ENCODE measurements at regions of chr10 and their contacts with region 1.

Region 1: DNA sequence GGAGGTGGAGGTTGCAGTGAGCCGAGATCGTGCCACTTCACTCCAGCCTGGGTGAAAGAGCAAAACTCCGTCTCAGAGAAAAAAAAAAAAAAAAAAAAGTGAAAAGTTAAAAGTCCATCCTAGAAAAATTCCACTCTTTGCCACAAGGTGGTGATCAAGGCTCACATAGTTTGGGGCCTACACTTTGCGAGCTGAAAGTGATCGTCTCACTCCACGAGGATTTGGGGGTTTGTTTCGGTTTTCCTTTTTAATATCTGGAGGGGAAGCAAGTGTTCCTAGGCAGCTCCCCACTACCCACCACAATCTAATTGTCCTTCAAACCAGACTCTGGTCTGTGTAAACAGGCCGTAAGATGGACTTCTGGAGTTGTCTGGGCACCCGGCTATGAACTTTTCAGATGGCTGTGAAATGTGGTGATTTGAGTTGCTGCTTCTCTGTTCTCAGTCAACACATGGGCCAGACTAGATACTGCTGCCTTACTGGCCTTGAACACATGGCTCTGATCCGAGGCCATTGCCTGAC is 27.1 kb downstream of the PRLHR start:
- DNase-seq: peak in 3 of 6 donors; percentile 42 to 63 (median 44)
- ATAC-seq: peak; percentile 78 to 92 (median 83)
- H3K4me3 ChIP-seq: no peak overlapping the region
- H3K27ac ChIP-seq: no peak overlapping the region
- H3K4me1 ChIP-seq: no peaks in the 10 kb centered on the region
- H3K27me3 ChIP-seq: no peaks in the 10 kb centered on the region
- CTCF ChIP-seq: peak; percentile 58 to 80 (median 76)

Region 2: GRCh38 chr10:118430190-118430589 is 138.2 kb before region 1 on chr10:
- intact Hi-C with region 1: no loop called
- DNase-seq: no peak
- ATAC-seq: no peak
- H3K4me3 ChIP-seq: no peak overlapping the region
- H3K27ac ChIP-seq: no peak overlapping the region
- H3K4me1 ChIP-seq: no peaks in the 10 kb centered on the region
- H3K27me3 ChIP-seq: no peaks in the 10 kb centered on the region
- CTCF ChIP-seq: no peak

Region 3: GRCh38 chr10:118720685-118721538 is 152.5 kb after region 1 on chr10:
- intact Hi-C with region 1: loop called in 2 of 3 experiments (anchors 5 kb)
- DNase-seq: peak in 1 of 6 donors; percentile 62
- ATAC-seq: peak; percentile 56 to 88 (median 82)
- H3K4me3 ChIP-seq: no peak overlapping the region
- H3K27ac ChIP-seq: no peak overlapping the region
- H3K4me1 ChIP-seq: peaks cover 10 to 13% (median 10%) of the 10 kb centered on the region in 3 donors
- H3K27me3 ChIP-seq: no peaks in the 10 kb centered on the region
- CTCF ChIP-seq: peak; percentile 49 to 74 (median 66)

Region 4: DNA sequence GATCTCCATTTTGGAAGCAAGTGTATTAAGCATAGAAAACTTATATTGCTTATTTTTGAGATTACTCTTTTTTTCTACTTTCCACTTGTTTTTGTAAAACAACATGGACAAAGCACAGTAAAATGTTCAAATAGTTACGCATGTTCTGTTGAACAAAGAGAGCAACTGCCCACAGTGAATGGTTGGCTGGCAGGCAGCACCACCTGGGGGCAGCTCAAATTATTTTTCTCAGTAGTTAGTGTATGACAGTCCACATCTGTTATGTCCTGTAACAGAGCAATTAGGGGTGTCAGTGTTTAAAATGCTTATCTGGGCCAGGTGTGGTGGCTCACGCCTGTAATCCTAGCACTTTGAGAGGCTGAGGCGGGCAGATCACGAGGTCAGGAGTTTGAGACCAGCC is 232.5 kb after region 1 on chr10:
- intact Hi-C with region 1: loop called in 1 of 3 experiments (anchors 10 kb)
- DNase-seq: peak in 2 of 6 donors; percentile 29 to 42
- ATAC-seq: peak in 3 of 4 donors; percentile 82 to 86 (median 83)
- H3K4me3 ChIP-seq: no peak overlapping the region
- H3K27ac ChIP-seq: no peak overlapping the region
- H3K4me1 ChIP-seq: no peaks in the 10 kb centered on the region
- H3K27me3 ChIP-seq: no peaks in the 10 kb centered on the region
- CTCF ChIP-seq: peak in 2 of 4 donors; percentile 18 to 19